Vagina (tissue), 2 donors: ENCODE measurements at regions of chr7 and their contacts with region 1.

Region 1: GRCh38 chr7:81499262-81500116 is 270.4 kb downstream of the HGF start:
- DNase-seq: no peak
- H3K4me3 ChIP-seq: no peak overlapping the region
- H3K27ac ChIP-seq: peak overlapping the region; percentile 72
- H3K4me1 ChIP-seq: peaks cover 17% of the 10 kb centered on the region
- H3K27me3 ChIP-seq: no peaks in the 10 kb centered on the region
- CTCF ChIP-seq: peak; percentile 9 to 77 (median 65)
- POLR2A ChIP-seq: no peak

Region 2: DNA sequence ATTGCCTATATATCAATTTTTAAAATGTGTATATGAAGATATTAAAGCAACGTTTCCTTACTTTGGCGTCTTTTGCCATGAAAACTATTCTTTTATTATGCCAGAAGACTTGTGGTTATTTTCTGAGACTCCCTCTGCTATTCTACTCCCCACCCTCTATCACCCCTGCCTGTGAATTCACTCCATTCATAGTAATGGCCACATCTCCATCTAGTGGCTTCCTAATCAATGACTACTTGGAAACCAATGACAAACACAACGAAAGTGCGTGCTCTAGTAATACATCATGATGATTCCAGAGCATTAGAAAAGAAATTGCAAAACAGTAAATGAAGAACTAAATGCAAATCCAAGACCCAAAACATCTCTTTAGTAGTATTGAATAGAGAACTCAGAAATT is 457.0 kb after region 1 on chr7:
- intact Hi-C with region 1: loop called (anchors 5 kb)
- DNase-seq: no peak
- H3K4me3 ChIP-seq: no peak overlapping the region
- H3K27ac ChIP-seq: no peak overlapping the region
- H3K4me1 ChIP-seq: no peaks in the 10 kb centered on the region
- H3K27me3 ChIP-seq: no peaks in the 10 kb centered on the region
- CTCF ChIP-seq: peak in 1 of 3 experiments; percentile 49
- POLR2A ChIP-seq: no peak